AG04450 (cell line): ENCODE measurements at regions of chr9 and their contacts with region 1.

Region 1: DNA sequence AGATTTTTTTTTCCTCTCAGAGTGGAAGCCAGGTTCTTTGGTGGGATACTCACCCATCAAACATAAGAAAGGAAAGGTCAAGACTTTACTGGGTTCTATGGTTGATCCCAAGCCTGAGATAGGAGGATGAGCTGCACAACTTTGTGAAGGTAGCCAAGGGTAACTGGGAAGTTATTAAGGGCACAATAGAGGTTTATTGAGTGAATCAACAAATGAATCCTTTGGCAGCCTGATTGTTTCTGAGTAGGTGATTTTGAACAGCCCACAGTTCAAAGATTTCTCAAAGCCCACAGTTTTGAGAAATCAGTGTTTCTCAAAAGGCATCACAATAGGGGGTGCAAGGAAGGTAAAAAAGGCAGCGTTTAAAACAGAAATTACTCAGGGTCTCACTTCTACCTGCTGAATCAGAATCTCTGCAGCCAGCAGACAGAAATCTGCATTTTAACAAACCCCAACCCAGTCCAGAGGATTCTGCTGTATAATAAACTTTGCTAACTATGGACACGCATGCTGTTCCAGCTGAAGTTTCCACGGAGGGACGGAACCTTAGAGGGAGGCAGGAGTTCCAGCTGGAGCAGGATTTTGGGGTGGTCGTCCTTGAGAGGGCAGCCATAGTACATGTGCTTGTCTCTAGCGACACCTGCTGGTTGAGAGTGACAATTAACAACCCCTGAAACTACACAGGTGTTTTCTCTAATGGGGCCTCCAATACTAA is 32.7 kb upstream of the FSD1L start:
- DNase-seq: no peak
- H3K4me3 ChIP-seq: no peak overlapping the region
- H3K27ac ChIP-seq: no peak overlapping the region
- H3K27me3 ChIP-seq: no peaks in the 10 kb centered on the region
- CTCF ChIP-seq: peak; percentile 86

Region 2: DNA sequence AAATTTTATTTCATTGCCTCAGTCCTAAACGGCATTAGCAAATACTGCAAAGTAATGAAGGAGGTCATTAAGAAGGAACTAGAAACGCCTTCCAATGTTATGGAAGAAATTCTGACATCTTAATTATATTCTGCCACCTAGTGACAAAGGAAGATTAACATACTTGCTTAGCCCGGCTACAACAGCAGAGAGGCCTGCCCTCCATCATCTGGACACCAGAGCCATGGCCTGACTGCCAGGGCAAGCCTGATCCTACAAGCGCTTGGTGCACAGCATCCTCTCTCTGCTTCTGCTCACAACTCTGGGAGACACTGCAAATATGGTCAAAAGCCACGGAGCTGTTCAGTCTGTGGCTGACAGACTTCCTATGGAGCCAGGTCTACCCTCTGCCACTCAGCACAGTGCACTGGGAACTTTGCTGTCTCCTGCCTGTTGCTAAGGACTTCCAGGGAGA is 257.9 kb before region 1 on chr9:
- CTCF ChIA-PET with region 1: interaction called, 38 read pairs
- POLR2A ChIA-PET with region 1: no interaction called
- DNase-seq: peak; percentile 42
- H3K4me3 ChIP-seq: no peak overlapping the region
- H3K27ac ChIP-seq: no peak overlapping the region
- H3K27me3 ChIP-seq: no peaks in the 10 kb centered on the region
- CTCF ChIP-seq: peak; percentile 46

Region 3: DNA sequence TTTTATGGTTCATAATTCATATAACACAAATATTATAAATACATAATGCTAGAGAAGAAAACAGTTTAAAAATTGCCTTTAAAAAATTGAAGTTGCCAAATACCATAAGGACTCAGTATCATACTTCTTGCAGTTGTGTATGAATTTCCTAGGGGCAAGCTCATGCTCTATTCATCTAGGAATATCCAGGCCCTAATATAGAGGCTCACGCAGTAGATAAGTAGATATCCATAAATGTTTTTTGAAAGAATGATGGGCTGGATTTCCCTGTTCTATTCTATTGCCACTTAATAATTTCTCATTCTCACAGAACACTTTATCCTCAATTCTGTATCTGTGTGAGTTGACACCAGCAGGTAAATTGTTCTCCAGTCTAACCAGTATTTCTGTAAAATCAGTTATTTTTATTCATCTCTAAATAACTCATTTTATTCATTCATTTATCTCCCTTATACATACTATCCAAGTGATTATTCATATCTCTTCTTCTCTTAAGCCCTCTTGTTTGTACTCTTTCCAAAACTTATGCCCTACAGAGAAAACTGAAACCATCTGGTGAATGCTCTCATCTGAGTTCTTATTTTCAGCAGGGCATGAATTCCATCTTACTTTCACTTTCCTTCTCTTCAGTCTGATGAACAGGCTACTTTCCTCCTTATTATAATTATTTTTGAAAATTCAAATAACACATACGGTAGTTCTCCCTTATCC is 73.5 kb before region 1 on chr9:
- CTCF ChIA-PET with region 1: interaction called, 10 read pairs
- POLR2A ChIA-PET with region 1: no interaction called
- DNase-seq: no peak
- H3K4me3 ChIP-seq: no peak overlapping the region
- H3K27ac ChIP-seq: no peak overlapping the region
- H3K27me3 ChIP-seq: no peaks in the 10 kb centered on the region
- CTCF ChIP-seq: no peak

Region 4: DNA sequence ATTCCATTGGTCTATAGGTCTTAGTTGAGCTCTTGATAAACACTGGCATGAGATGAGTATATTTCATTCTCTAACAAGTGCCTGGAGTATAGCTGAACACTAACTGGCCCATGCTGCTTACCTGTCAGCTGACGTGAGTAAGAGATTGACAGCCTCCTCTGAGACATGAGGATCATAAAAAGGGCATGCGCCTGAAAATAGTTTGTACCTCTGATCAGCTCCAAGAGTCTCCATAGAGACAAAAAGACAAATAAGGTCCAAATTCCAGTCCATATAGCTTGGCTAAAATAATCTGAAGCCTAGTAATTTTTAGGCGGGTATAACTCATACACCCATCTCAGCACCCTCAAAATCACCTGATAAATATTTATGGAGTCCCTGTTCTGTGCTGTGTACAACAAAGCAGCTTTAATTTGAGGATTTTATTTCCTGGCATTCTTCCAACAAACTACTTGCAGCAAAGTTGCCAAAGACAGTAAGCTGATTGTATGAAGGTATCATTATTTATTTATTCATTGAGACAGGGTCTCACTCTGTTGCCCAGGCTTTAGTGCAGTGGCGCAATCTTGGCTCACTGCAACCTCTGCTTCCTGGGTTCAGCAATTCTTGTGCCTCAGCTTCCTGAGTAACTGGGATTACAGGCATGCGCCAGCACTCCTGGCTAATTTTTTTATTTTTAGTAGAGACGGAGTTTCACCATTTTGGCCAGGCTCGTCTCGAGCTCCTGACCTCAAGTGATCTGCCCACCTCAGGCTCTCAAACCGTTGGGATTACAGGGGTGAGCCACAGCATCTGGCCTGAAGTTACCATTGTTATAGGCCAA is 16.5 kb after region 1 on chr9:
- CTCF ChIA-PET with region 1: interaction called, 12 read pairs
- POLR2A ChIA-PET with region 1: no interaction called
- DNase-seq: no peak
- H3K4me3 ChIP-seq: no peak overlapping the region
- H3K27ac ChIP-seq: no peak overlapping the region
- H3K27me3 ChIP-seq: no peaks in the 10 kb centered on the region
- CTCF ChIP-seq: no peak